Naive thymus-derived CD4-positive, alpha-beta T cell (primary cell): ENCODE measurements at regions of chr3 and their contacts with region 1.

Region 1: DNA sequence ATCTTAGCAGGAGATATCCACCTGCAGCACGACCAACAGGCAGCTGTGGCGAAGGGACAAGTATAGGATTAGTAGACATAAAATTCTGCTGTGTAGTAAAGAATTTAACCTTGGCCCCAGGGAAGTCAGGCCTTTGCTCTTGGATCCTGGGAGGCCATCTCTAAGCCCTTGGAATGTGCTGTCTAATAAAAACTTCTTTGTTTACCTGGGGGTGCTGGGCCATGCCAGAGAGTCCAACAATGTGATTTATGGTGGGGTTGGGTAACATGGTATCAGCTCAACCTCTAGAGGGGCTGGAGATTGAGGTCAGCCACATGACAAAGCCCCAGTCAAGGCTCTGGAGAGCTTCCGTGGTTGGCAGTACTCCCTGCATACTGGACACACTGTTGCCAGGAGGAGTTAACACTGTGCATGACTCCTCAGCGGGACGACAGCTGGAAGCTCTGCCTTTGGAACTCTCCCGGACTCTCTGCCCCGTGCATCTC is 52.4 kb downstream of the HEG1 start:
- DNase-seq: no peak
- ATAC-seq: no peak
- H3K4me3 ChIP-seq: no peak overlapping the region
- H3K4me3 Mint-ChIP-seq: peak overlapping the region in 5 of 10 donors; percentile 17 to 77 (median 43)
- H3K27ac ChIP-seq: peak overlapping the region; percentile 81
- H3K27ac Mint-ChIP-seq: peak overlapping the region in 8 of 9 donors; percentile 92 to 99 (median 96)
- H3K4me1 ChIP-seq: peaks cover 0 to 28% of the 10 kb centered on the region in 2 donors
- H3K4me1 Mint-ChIP-seq: peaks cover 9 to 68% (median 39%) of the 10 kb centered on the region in 7 donors
- H3K27me3 ChIP-seq: no peaks in the 10 kb centered on the region
- H3K27me3 Mint-ChIP-seq: no peaks in the 10 kb centered on the region

Region 2: DNA sequence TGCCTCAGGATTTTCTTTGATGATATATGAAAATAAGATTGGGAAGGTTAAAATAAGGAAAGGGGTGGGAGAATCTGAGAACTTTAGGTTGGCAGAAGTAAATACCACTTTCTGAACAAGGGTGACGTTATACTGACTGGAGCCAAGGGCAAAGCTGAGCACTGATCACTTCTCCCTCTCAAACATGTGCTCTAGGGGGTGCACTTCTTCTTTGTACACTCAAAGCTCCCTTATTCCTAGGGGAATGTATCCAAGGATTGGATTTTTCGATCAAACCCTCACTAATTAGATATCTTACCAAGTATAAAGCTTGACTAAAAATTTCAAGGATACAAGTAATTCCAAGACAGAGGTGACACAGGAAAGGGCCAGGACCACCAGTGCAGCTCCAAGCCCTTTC is 517.1 kb before region 1 on chr3:
- CTCF ChIA-PET with region 1: no interaction called
- POLR2A ChIA-PET with region 1: no interaction called
- intact Hi-C with region 1: no loop called
- DNase-seq: no peak
- ATAC-seq: no peak
- H3K4me3 ChIP-seq: no peak overlapping the region
- H3K4me3 Mint-ChIP-seq: no peak overlapping the region
- H3K27ac ChIP-seq: no peak overlapping the region
- H3K27ac Mint-ChIP-seq: no peak overlapping the region
- H3K4me1 ChIP-seq: no peaks in the 10 kb centered on the region
- H3K4me1 Mint-ChIP-seq: peaks cover 0 to 6% (median 0%) of the 10 kb centered on the region in 7 donors
- H3K27me3 ChIP-seq: no peaks in the 10 kb centered on the region
- H3K27me3 Mint-ChIP-seq: peaks cover 27 to 36% (median 35%) of the 10 kb centered on the region in 5 donors

Region 3: DNA sequence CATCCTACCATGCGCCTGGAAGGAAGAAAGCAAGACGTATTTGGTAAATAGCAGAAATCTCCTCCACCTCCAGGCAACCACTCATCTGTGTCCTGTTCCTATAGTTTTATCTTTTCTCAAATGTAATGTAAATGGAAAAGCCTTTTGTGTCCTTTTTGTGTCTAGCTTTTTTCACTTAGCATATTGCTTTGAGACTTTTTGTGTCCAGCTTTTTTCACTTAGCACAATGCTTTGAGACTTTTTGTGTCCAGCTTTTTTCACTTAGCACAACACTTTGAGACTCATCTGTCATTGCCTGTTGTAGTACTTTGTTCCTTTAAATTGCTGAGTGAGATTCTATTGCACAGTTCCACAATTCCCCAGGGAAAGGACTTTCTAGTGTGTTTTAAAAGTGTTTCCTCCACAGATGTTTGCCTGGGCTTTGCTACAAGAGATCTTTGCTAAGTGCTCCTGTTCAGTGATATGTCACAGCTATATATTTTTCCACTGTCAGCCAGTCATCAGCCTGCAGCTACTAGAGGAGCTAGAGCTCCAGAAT is 40.9 kb before region 1 on chr3:
- CTCF ChIA-PET with region 1: no interaction called
- POLR2A ChIA-PET with region 1: no interaction called
- intact Hi-C with region 1: no loop called
- DNase-seq: no peak
- ATAC-seq: no peak
- H3K4me3 ChIP-seq: no peak overlapping the region
- H3K4me3 Mint-ChIP-seq: no peak overlapping the region
- H3K27ac ChIP-seq: no peak overlapping the region
- H3K27ac Mint-ChIP-seq: no peak overlapping the region
- H3K4me1 ChIP-seq: no peaks in the 10 kb centered on the region
- H3K4me1 Mint-ChIP-seq: peaks cover 0 to 6% (median 2%) of the 10 kb centered on the region in 7 donors
- H3K27me3 ChIP-seq: no peaks in the 10 kb centered on the region
- H3K27me3 Mint-ChIP-seq: peaks cover 0 to 15% (median 0%) of the 10 kb centered on the region in 5 donors

Region 4: DNA sequence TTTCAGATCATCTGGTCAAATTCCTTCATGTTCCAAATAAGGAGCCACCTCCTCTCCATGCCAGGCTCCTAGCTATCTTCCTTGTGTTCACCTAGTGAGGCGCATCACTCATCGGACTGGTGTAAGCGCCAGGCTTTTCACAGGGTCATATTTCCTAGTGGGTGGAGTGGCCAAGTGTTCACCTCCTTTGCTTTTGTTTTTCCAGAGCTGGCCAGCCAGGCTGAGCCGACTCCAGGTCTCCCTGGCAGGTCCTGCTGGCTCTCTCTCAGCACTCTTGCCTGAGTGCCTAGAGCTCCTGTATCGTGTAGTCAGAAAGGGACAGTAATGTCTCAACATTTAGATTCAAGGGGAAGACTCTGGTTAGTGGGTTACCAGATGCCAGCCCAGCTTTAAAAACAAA is 21.4 kb after region 1 on chr3:
- CTCF ChIA-PET with region 1: interaction called, 3 read pairs
- POLR2A ChIA-PET with region 1: no interaction called
- intact Hi-C with region 1: loop called in 1 of 2 experiments (anchors 2 kb)
- DNase-seq: no peak
- ATAC-seq: no peak
- H3K4me3 ChIP-seq: no peak overlapping the region
- H3K4me3 Mint-ChIP-seq: peak overlapping the region in 8 of 10 donors; percentile 23 to 68 (median 42)
- H3K27ac ChIP-seq: no peak overlapping the region
- H3K27ac Mint-ChIP-seq: peak overlapping the region; percentile 34 to 92 (median 65)
- H3K4me1 ChIP-seq: peaks cover 22 to 24% of the 10 kb centered on the region in 2 donors
- H3K4me1 Mint-ChIP-seq: peaks cover 45 to 85% (median 68%) of the 10 kb centered on the region in 7 donors
- H3K27me3 ChIP-seq: no peaks in the 10 kb centered on the region
- H3K27me3 Mint-ChIP-seq: no peaks in the 10 kb centered on the region

Region 5: DNA sequence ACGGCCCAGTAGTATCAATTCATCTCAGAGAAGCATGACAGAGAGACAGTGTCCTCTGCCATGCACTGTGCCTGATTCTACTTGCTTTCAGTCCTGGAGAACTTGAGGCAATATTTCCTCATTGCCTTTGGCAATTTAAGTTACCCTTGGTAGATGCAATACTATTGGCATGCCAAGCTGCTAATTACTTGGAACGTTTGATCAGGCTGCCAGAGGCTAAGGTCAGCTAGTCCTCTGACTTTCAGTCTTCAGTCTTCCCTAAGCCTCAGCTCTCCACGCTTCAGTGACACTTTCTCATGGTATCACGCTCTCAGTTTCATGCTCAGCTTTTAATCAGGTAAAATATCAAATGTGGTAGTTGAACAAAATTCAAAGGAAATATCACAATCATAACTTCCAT is 605.0 kb after region 1 on chr3:
- CTCF ChIA-PET with region 1: no interaction called
- POLR2A ChIA-PET with region 1: no interaction called
- intact Hi-C with region 1: no loop called
- DNase-seq: no peak
- ATAC-seq: no peak
- H3K4me3 ChIP-seq: no peak overlapping the region
- H3K4me3 Mint-ChIP-seq: no peak overlapping the region
- H3K27ac ChIP-seq: no peak overlapping the region
- H3K27ac Mint-ChIP-seq: no peak overlapping the region
- H3K4me1 ChIP-seq: no peaks in the 10 kb centered on the region
- H3K4me1 Mint-ChIP-seq: peaks cover 0 to 3% (median 0%) of the 10 kb centered on the region in 7 donors
- H3K27me3 ChIP-seq: no peaks in the 10 kb centered on the region
- H3K27me3 Mint-ChIP-seq: peaks cover 0 to 17% (median 0%) of the 10 kb centered on the region in 5 donors